ENCODE measurements at regions of chr12 and their contacts with region 1.

Region 1: DNA sequence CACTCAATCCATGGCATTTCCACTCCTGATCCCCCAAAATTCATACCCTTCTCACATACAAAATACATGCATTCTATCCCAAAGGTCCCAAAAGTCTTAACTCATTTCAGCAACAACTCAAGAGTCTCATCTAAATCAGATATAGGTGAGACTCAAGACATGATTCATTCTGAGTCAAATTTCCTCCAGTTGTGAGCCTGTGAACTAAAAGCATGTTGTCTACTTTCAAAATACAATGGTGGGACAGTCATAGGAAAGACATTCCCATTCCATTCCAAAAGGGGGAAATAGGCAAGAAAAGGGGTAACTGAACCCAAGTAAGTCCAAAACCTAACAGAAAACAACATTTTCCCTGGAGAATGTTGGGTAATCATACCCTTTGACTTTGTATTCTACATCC is 103.3 kb downstream of the C12orf75 start:
- DNase-seq: no peak
- H3K4me3 ChIP-seq: no peak overlapping the region
- H3K27ac ChIP-seq: no peak overlapping the region
- H3K27me3 ChIP-seq: no peaks in the 10 kb centered on the region
- CTCF ChIP-seq: no peak

Region 2: DNA sequence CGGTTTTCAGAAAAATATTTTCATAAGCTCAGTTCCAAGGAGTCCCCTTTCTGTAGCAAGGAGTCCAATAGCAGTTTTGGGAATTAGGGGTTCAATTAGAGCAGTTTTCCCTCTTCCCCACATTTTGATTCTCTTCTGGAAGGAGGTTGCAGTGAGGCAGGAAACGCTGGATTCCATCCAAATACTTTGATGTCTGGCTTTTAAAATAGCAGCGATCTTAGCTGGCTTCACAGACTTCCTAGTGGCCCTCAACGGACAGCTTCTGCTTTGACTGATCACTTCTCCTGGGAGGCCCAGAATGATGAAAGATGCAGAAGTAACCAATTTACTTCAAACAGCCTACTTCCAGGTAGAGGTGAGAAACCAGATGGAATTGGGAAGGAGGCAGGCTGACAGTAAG is 40.2 kb before region 1 on chr12:
- CTCF ChIA-PET with region 1: no interaction called
- POLR2A ChIA-PET with region 1: no interaction called
- DNase-seq: no peak
- H3K4me3 ChIP-seq: no peak overlapping the region
- H3K27ac ChIP-seq: no peak overlapping the region
- H3K27me3 ChIP-seq: no peaks in the 10 kb centered on the region
- CTCF ChIP-seq: no peak

Region 3: GRCh38 chr12:105420659-105421240 is 13.1 kb before region 1 on chr12:
- CTCF ChIA-PET with region 1: interaction called, 21 read pairs
- POLR2A ChIA-PET with region 1: no interaction called
- DNase-seq: peak; percentile 59
- H3K4me3 ChIP-seq: no peak overlapping the region
- H3K27ac ChIP-seq: no peak overlapping the region
- H3K27me3 ChIP-seq: no peaks in the 10 kb centered on the region
- CTCF ChIP-seq: peak; percentile 90